Natural killer cell (primary cell): ENCODE measurements at regions of chr1 and their contacts with region 1.

Region 1: DNA sequence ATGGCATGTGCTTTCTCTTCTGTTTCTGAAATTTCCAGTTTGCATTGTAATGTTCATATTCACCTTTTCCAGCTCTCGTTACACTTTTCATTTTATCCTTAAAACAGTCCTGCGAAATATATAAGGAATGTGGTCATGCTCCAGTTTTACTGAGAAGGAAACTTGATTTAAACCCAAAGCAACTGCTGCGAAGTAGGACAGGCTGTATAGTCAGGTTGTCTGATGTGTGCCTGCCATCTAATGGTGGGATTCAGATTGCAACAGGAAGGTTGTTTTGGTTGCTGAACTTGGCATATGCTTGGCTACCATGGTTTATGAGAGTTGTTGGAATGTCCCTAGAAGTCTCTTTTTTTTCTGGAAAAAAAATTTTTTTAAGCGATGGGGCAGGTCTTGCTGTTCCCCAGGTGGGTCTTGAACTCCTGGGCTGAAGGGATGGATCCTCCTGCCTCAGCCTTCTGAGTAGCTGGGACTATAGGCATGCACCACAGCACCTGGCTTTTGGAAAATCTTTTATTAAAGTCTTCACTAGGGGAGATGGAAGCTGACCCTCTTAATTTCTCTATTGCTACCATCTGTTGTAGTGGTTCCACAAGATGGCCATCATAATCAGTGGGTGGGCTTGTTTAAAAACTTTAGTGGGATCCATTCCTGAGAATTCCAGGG is 86.9 kb downstream of the UCK2 start:
- DNase-seq: peak; percentile 44 to 87
- ATAC-seq: peak; percentile 85 to 99 (median 95)
- H3K4me3 ChIP-seq: no peak overlapping the region
- H3K4me3 Mint-ChIP-seq: no peak overlapping the region
- H3K27ac ChIP-seq: no peak overlapping the region
- H3K27ac Mint-ChIP-seq: no peak overlapping the region
- H3K4me1 ChIP-seq: no peaks in the 10 kb centered on the region
- H3K4me1 Mint-ChIP-seq: peaks cover 4 to 5% of the 10 kb centered on the region in 2 donors
- H3K27me3 ChIP-seq: no peaks in the 10 kb centered on the region
- H3K27me3 Mint-ChIP-seq: no peaks in the 10 kb centered on the region
- CTCF ChIP-seq: peak; percentile 81

Region 2: DNA sequence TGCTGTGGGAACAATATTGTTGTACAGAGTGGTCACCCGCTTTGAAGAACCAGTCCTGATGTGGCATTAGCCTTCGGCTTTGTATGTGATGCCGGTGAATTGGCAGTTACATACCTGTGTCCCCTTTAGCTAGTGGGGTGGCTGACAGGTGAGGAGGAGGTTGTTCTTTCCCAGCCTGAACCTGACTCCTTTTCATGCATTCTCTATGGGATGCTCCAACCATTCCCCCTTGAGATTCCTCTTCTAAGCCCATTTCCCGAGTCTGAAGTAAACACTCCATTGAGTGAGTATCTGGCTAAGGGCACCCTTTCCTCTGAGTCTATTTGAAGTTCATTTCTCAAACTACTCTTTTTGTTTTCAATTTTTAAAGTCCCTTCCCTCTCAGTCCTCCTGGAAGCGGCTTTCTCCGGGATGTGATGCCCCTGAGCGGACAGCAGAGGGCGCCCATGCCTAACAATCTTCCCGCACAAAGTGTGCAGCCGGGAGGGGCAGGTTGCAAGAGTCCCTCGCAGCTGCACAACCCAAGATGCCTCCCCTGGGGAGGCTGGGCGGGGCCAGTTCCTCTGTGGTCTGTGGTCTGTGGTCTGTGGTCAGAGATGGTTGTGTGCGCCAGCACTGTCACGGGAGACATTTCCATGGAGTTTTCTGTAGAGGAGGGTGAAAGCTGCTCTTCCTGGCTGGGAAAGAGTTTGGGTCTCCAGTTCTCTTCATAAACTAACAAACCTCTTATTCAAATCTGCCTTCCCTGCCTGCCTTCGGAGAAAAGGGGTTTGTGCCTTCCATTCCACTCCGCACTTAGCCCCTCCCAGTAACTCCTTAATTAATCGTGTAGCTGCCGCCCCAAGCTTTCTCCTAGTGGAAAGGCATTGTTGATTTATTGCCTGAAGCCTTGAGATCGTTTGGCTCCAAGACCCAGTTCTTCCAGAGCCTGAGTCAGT is 521.4 kb before region 1 on chr1:
- intact Hi-C with region 1: loop called (anchors 1 kb)
- DNase-seq: peak; percentile 79 to 96
- ATAC-seq: peak; percentile 96 to 99 (median 99)
- H3K4me3 ChIP-seq: no peak overlapping the region
- H3K4me3 Mint-ChIP-seq: peak overlapping the region; percentile 62
- H3K27ac ChIP-seq: no peak overlapping the region
- H3K27ac Mint-ChIP-seq: peak overlapping the region; percentile 70 to 82
- H3K4me1 ChIP-seq: peaks cover 14% of the 10 kb centered on the region
- H3K4me1 Mint-ChIP-seq: peaks cover 13 to 18% of the 10 kb centered on the region in 2 donors
- H3K27me3 ChIP-seq: peaks cover 24% of the 10 kb centered on the region
- H3K27me3 Mint-ChIP-seq: peaks cover 21 to 78% of the 10 kb centered on the region in 2 donors
- CTCF ChIP-seq: peak; percentile 82

Region 3: DNA sequence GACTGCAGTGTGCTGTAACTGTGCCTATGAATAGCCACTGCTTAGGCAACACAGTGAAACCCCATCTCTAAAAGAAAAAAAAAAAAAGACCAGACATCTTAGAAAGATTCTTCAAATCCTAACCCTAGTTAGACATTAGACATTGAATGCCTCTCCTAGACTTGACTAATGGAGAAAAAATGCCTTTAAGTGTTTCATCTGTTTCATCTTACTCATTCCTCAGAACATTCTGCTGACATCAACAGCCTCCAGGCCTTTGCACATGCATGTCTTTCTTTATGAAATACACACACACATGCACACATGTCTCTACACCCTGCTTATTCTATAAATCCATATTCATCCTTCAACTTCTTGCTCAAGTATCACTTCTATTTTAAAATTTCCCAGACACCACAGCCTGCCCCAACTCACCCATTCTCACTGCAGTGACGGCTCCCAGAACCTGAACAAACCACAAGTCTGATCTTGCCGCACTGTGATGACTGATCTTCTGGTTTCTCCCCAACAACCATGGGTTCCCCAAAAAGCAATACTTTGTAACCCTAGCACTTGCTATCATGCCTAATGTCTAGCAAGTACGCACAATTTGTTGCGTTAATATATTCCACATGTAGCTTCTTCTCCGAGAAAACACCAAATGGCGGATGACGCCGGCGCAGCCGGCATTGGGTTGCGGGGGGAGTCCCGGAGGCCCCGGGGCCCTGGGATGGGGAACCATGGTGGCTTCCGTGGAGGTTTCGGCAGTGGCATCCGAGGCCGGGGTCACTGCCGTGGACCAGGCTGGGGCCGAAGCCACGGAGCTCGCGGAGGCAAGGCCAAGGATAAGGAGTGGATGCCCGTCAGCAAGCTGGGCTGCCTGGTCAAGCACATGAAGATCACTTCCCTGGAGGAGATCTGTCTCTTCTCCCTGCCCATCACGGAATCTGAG is 333.1 kb before region 1 on chr1:
- intact Hi-C with region 1: no loop called
- DNase-seq: no peak
- ATAC-seq: no peak
- H3K4me3 ChIP-seq: no peak overlapping the region
- H3K4me3 Mint-ChIP-seq: no peak overlapping the region
- H3K27ac ChIP-seq: no peak overlapping the region
- H3K27ac Mint-ChIP-seq: no peak overlapping the region
- H3K4me1 ChIP-seq: no peaks in the 10 kb centered on the region
- H3K4me1 Mint-ChIP-seq: no peaks in the 10 kb centered on the region
- H3K27me3 ChIP-seq: peaks cover 5% of the 10 kb centered on the region
- H3K27me3 Mint-ChIP-seq: peaks cover 19 to 38% of the 10 kb centered on the region in 2 donors
- CTCF ChIP-seq: no peak

Region 4: DNA sequence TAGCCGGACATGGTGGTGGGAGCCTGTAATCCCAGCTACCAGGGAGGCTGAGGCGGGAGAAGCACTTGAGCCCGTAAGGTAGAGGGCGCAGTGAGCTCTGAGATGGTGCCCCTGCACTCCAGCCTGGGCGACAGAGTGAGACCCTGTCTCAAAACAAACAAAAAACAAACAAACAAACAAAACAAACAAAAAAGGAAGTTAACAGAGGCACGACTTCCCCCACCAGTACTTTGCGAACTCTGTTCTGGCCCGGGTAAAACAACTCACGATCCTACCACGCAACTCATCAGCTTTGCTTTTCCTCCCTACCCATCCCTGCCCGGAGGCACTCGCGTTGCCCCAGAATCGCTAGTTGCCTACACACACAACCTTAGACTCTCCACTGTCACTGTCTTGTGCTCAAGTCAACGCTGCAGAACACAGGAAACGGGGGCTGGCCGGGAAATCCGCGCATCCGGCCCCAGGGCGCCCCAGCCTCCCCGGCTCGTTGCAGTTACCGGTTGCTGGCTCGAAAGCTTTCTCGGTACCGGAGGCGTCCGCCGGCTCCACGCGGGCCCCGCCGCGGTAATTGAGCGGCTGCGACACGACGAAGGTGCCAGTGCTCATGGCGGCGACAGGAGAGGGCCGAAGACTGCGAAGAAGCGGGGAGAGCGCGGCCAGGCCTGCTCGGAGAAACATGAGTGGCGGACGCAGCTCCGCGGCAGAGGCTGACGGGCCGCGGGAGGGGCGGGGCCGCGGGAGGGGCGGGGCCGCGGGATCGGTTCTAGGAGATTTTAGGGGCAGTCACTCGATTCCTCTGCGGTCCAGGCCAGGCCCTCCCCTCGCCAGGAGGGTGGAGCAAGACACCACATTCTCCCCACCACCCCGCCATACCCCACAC is 216.1 kb before region 1 on chr1 and contains the start of gene ALDH9A1:
- intact Hi-C with region 1: loop called (anchors 5 kb)
- DNase-seq: peak; percentile 81 to 87
- ATAC-seq: peak; percentile 88 to 95 (median 90)
- H3K4me3 ChIP-seq: peak within 1 kb of the TSS; percentile 70
- H3K4me3 Mint-ChIP-seq: peak within 1 kb of the TSS; percentile 93
- H3K27ac ChIP-seq: peak within 1 kb of the TSS; percentile 84
- H3K27ac Mint-ChIP-seq: peak within 1 kb of the TSS; percentile 97 to 100
- H3K4me1 ChIP-seq: peaks cover 10% of the 10 kb centered on the region
- H3K4me1 Mint-ChIP-seq: peaks cover 21 to 25% of the 10 kb centered on the region in 2 donors
- H3K27me3 ChIP-seq: no peaks in the 10 kb centered on the region
- H3K27me3 Mint-ChIP-seq: no peaks in the 10 kb centered on the region
- CTCF ChIP-seq: no peak
- total RNA-seq, gene ALDH9A1: 38.0 to 57.1 (median 50.3) TPM

Region 5: GRCh38 chr1:165717918-165718515 is 196.2 kb before region 1 on chr1:
- intact Hi-C with region 1: loop called (anchors 1 kb)
- DNase-seq: peak in 1 of 2 donors; percentile 60
- ATAC-seq: peak in 1 of 3 donors; percentile 45
- H3K4me3 ChIP-seq: no peak overlapping the region
- H3K4me3 Mint-ChIP-seq: no peak overlapping the region
- H3K27ac ChIP-seq: no peak overlapping the region
- H3K27ac Mint-ChIP-seq: no peak overlapping the region
- H3K4me1 ChIP-seq: no peaks in the 10 kb centered on the region
- H3K4me1 Mint-ChIP-seq: no peaks in the 10 kb centered on the region
- H3K27me3 ChIP-seq: no peaks in the 10 kb centered on the region
- H3K27me3 Mint-ChIP-seq: no peaks in the 10 kb centered on the region
- CTCF ChIP-seq: peak; percentile 49

Region 6: DNA sequence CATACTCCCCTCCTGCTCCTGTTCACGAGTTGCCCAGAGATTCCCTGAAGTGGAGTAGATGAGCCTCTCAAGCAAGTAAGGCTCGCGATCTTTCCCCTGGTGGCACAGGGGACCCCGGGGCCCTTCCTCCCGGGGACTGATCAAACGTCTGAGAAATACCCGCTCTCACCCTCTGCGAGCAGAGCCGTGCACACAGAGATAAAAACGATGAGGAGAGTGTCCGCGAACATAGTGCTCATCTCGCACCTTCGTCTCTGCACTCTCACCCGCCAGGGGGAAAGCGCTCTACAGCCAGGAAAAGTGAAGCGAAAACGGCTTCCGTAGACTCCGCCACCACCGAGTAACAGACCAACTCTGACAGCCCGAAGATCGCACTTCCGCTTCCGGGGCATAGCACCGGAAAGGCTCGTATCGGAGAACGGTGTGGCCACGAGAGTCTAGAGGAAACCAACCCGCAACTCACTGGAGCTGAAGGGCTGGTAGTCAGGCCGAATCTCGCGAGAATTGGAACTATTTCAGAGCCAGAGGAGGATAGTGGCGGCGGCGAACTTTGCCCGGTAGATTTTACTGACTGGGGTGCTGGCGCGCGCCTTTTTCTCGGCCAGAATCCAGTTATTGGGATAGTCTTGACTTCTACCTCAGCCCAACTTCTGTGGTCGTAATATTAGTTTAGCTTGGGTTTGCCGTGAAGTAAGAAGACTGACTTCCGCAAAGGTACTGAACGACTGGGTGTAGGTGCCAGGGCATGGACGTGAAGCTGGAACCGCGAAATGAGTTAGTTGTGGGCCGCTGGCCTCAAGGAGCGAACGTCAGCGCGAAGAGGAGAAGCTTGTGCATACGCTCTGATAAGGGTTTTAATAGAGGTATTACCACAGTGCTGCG is 145.5 kb before region 1 on chr1 and contains the start of gene TMCO1:
- intact Hi-C with region 1: loop called (anchors 1 kb)
- DNase-seq: peak; percentile 87 to 99
- ATAC-seq: peak; percentile 93 to 97 (median 97)
- H3K4me3 ChIP-seq: peak within 1 kb of the TSS; percentile 75
- H3K4me3 Mint-ChIP-seq: peak within 1 kb of the TSS; percentile 98
- H3K27ac ChIP-seq: peak within 1 kb of the TSS; percentile 92
- H3K27ac Mint-ChIP-seq: peak within 1 kb of the TSS; percentile 95 to 98
- H3K4me1 ChIP-seq: peaks cover 12% of the 10 kb centered on the region
- H3K4me1 Mint-ChIP-seq: peaks cover 50 to 54% of the 10 kb centered on the region in 2 donors
- H3K27me3 ChIP-seq: no peaks in the 10 kb centered on the region
- H3K27me3 Mint-ChIP-seq: no peaks in the 10 kb centered on the region
- CTCF ChIP-seq: no peak
- total RNA-seq, gene TMCO1: 45.4 to 52.6 (median 47.6) TPM

Region 7: GRCh38 chr1:165851034-165851658 is 63.1 kb before region 1 on chr1:
- intact Hi-C with region 1: no loop called
- DNase-seq: no peak
- ATAC-seq: peak in 2 of 3 donors; percentile 28 to 41
- H3K4me3 ChIP-seq: no peak overlapping the region
- H3K4me3 Mint-ChIP-seq: peak overlapping the region; percentile 53
- H3K27ac ChIP-seq: no peak overlapping the region
- H3K27ac Mint-ChIP-seq: peak overlapping the region in 1 of 2 donors; percentile 35
- H3K4me1 ChIP-seq: peaks cover 28% of the 10 kb centered on the region
- H3K4me1 Mint-ChIP-seq: peaks cover 72 to 74% of the 10 kb centered on the region in 2 donors
- H3K27me3 ChIP-seq: no peaks in the 10 kb centered on the region
- H3K27me3 Mint-ChIP-seq: no peaks in the 10 kb centered on the region
- CTCF ChIP-seq: no peak

Region 8: GRCh38 chr1:165965857-165966256 is 51.6 kb after region 1 on chr1:
- intact Hi-C with region 1: no loop called
- DNase-seq: no peak
- ATAC-seq: no peak
- H3K4me3 ChIP-seq: no peak overlapping the region
- H3K4me3 Mint-ChIP-seq: no peak overlapping the region
- H3K27ac ChIP-seq: no peak overlapping the region
- H3K27ac Mint-ChIP-seq: no peak overlapping the region
- H3K4me1 ChIP-seq: no peaks in the 10 kb centered on the region
- H3K4me1 Mint-ChIP-seq: no peaks in the 10 kb centered on the region
- H3K27me3 ChIP-seq: no peaks in the 10 kb centered on the region
- H3K27me3 Mint-ChIP-seq: peaks cover 4 to 16% of the 10 kb centered on the region in 2 donors
- CTCF ChIP-seq: no peak